ENCODE measurements at regions of chr2 and their contacts with region 1.

Region 1: DNA sequence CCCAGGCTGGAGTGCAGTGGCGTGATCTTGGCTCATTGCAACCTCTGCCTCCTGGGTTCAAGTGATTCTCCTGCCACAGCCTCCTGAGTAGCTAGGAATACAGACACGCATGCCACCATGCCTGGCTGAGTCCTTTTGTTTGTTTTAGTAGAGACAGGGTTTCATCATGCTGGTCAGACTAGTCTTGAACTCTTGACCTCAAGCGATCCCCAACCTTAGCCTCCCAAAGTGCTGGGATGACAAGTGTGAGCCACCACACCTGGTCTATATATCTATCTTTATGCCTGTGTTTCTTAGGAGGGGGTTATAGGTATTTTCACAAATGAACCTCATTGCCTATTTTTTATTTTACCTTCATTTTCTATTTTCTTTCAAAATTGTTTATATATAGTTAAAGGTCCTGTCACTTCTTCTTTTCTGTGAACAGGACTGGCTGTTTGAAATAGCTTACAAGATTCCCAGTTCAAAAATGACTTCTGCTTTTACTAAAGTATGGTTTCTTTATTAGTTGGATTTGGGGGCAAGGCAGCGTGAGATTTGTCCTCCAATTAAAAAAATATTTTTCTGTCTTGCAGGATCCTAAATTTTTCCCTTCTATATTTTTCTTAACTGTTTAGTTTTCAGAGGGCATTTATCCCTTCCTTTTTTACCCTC is 16.4 kb upstream of the MARCHF7 start:
- DNase-seq: no peak
- ATAC-seq: no peak
- H3K4me3 ChIP-seq: peak overlapping the region in 1 of 10 donors; percentile 16
- H3K27ac ChIP-seq: no peak overlapping the region
- H3K4me1 ChIP-seq: peaks cover 0 to 3% (median 0%) of the 10 kb centered on the region in 9 donors
- H3K27me3 ChIP-seq: no peaks in the 10 kb centered on the region
- CTCF ChIP-seq: no peak

Region 2: GRCh38 chr2:159035790-159036411 is 660.0 kb before region 1 on chr2:
- intact Hi-C with region 1: no loop called
- DNase-seq: no peak
- ATAC-seq: peak in 7 of 8 donors; percentile 53 to 74 (median 69)
- H3K4me3 ChIP-seq: no peak overlapping the region
- H3K27ac ChIP-seq: peak overlapping the region in 7 of 10 donors; percentile 6 to 50 (median 38)
- H3K4me1 ChIP-seq: peaks cover 17 to 62% (median 45%) of the 10 kb centered on the region in 9 donors
- H3K27me3 ChIP-seq: no peaks in the 10 kb centered on the region
- CTCF ChIP-seq: peak in 7 of 9 donors; percentile 15 to 53 (median 43)

Region 3: GRCh38 chr2:159476329-159476728 is 219.6 kb before region 1 on chr2:
- intact Hi-C with region 1: no loop called
- DNase-seq: no peak
- ATAC-seq: no peak
- H3K4me3 ChIP-seq: no peak overlapping the region
- H3K27ac ChIP-seq: no peak overlapping the region
- H3K4me1 ChIP-seq: peaks cover 0 to 5% (median 0%) of the 10 kb centered on the region in 9 donors
- H3K27me3 ChIP-seq: no peaks in the 10 kb centered on the region
- CTCF ChIP-seq: no peak

Region 4: DNA sequence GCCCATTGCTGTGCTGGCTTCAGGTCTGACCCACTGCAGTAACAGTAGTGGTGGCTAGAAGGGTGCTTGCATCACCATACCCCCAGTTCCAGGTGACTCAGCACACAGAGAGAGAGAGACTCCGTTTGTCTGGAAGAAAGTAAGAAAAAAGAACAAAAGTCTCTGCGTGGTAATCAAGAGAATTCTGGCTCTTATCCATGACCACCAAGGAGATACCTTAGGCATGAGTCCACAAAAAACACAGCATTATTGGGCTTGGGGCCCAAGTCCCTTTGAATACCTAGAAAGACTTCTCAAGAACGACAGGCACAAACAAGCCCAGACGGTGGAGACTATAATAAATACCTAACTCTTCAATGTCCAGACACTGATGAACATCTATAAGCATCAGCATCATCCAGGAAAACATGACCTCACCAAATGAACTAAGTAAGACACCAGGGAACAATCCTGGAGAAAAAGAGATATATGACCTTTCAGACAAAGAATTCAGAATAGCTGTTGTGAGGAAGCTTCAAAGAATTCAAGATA is 57.9 kb before region 1 on chr2:
- intact Hi-C with region 1: loop called in 2 of 10 experiments (anchors 10 kb)
- DNase-seq: no peak
- ATAC-seq: no peak
- H3K4me3 ChIP-seq: no peak overlapping the region
- H3K27ac ChIP-seq: no peak overlapping the region
- H3K4me1 ChIP-seq: peaks cover 0 to 15% (median 0%) of the 10 kb centered on the region in 9 donors
- H3K27me3 ChIP-seq: no peaks in the 10 kb centered on the region
- CTCF ChIP-seq: no peak